BJ (cell line): ENCODE measurements at regions of chr1 and their contacts with region 1.

Region 1: DNA sequence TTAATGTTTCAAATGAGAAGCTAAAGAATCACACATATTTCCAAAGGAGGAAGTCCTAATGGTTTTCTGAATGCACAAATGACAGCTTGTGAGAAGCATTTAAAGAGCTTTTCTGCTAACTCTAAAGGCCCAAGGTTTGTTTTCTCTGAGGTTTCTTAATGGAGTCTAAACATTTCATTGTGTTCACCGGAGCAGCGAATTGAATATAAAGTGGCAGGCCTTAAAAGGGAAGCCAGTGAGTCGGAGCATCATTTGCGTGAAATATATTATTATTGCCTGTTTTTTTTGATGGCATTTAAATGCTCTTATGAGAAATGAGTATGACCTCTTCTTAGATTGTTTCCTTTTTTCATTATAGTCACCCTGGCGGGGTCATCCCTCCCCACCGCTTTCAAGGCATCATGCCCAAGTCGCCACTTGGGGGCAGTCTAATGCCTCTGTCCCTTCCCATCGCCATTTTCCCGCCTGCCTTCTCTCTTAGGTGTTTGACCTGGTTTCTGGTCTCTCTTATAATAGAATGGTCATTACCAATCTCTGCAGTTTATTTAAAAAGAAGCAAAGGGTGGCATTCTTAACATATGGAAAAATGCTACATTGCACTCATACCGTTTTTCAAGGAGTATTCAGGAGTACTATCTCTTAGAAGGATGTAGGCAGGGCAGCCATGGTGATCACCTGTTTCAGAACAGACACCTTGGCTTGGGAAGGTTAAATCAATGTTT is 25.3 kb upstream of the OVAAL start:
- DNase-seq: no peak
- H3K4me3 ChIP-seq: no peak overlapping the region
- H3K27me3 ChIP-seq: no peaks in the 10 kb centered on the region
- CTCF ChIP-seq: peak; percentile 79

Region 2: DNA sequence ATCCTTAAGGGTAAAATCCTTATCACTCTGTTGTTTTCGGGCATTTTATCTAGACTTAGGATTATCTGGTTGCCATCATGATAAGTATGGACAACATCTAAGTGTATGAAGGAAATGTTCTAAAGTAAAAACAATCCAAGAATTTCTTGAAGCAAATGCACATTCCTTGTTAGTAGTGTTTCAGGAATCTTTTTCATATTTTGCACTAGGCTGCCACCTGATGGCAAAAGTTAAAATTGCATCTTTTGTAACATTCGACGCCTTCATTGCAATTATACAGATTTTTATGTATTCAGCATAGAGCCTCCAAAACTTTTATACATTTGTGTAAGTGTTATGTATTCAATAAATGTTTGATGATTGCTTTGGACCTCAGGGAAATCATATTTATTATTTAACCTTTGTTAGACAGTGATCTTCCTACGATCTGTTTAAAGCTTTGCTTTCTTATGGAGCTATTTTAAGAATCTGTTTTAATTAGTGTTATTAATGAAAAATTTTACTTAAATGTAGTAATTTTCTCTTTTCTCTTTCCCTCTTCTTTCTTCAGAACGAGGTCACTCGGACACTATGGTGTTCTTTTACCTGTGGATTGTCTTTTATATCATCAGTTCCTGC is 329.8 kb after region 1 on chr1:
- CTCF ChIA-PET with region 1: interaction called, 54 read pairs
- POLR2A ChIA-PET with region 1: no interaction called
- DNase-seq: peak; percentile 30
- H3K4me3 ChIP-seq: no peak overlapping the region
- H3K27me3 ChIP-seq: no peaks in the 10 kb centered on the region
- CTCF ChIP-seq: peak; percentile 63